PC-3 (cell line): ENCODE measurements at regions of chr2 and their contacts with region 1.

Region 1: GRCh38 chr2:149924028-149924427 is 336.5 kb upstream of the MMADHC start:
- DNase-seq: peak; percentile 61
- ATAC-seq: no peak
- H3K4me3 ChIP-seq: no peak overlapping the region
- H3K27ac ChIP-seq: peak overlapping the region; percentile 82
- H3K4me1 ChIP-seq: peaks cover 31% of the 10 kb centered on the region
- H3K27me3 ChIP-seq: no peaks in the 10 kb centered on the region
- CTCF ChIP-seq: no peak

Region 2: GRCh38 chr2:149629026-149629425 is 295.0 kb before region 1 on chr2:
- CTCF ChIA-PET with region 1: no interaction called
- POLR2A ChIA-PET with region 1: no interaction called
- intact Hi-C with region 1: no loop called
- DNase-seq: no peak
- ATAC-seq: no peak
- H3K4me3 ChIP-seq: no peak overlapping the region
- H3K27ac ChIP-seq: no peak overlapping the region
- H3K4me1 ChIP-seq: no peaks in the 10 kb centered on the region
- H3K27me3 ChIP-seq: no peaks in the 10 kb centered on the region
- CTCF ChIP-seq: no peak

Region 3: DNA sequence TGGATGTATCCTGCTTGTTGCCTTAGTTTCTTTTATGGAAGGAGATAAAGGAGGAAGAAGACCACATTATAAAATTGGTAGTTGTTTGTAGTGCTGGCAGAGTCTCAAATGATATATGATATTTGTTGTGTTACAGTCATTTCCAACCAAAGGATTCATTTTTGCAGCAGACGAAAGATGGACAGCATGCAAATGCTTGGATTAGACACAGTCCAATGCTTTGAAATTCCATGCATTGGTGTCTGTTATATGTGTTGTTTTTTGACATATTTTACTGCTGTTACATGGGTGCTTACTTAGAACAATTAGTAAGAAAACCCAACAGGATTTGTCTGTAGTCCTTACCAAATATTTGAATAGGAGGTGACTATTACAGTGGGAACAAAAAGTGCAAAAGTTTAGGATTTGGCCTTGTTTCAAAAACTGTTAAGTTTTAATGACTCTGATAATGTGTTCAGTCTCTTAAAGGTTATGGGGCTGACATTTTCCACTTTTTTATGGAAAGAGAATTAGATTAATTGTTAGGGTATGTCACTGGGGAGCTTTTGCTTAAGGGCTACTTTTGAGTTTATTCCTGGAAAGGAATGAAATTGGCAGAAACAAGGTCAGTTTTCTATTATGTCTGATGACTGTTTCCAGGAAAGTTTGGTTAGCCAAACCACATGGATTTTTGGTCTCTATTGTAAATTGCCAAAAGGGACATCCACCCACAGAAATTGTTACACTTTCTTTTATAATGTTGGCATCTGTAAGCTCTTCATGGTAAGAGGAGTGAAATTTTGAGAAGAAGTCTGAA is 107.1 kb before region 1 on chr2:
- CTCF ChIA-PET with region 1: no interaction called
- POLR2A ChIA-PET with region 1: no interaction called
- intact Hi-C with region 1: loop called (anchors 10 kb)
- DNase-seq: peak; percentile 7
- ATAC-seq: peak; percentile 70
- H3K4me3 ChIP-seq: no peak overlapping the region
- H3K27ac ChIP-seq: no peak overlapping the region
- H3K4me1 ChIP-seq: peaks cover 11% of the 10 kb centered on the region
- H3K27me3 ChIP-seq: no peaks in the 10 kb centered on the region
- CTCF ChIP-seq: no peak

Region 4: DNA sequence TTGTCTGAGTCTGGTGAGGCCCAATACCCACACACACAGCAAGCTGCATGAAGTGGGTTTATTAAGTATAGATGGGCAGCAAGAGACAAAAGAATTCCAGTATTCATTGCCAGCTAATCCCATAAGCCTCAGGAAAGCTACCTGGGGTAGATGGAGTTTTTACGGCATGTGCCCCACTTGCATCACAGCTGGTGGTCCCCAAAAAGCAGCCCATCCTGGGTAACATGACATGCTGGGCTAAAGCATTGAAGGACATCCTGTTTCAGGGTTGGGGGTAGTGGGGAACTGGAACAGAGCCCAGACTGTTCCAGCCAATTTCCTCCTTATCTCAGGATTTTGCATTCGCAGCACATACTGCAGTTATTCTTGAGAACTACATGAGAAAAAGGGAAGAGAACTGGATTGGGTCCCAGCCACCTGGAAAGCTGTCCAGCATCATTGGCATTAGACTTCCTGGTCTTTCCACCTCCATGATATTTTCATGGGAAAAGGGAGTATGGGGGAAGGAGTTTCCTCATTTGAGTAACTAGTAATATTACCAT is 96.4 kb before region 1 on chr2:
- CTCF ChIA-PET with region 1: no interaction called
- POLR2A ChIA-PET with region 1: no interaction called
- intact Hi-C with region 1: no loop called
- DNase-seq: no peak
- ATAC-seq: no peak
- H3K4me3 ChIP-seq: no peak overlapping the region
- H3K27ac ChIP-seq: no peak overlapping the region
- H3K4me1 ChIP-seq: no peaks in the 10 kb centered on the region
- H3K27me3 ChIP-seq: no peaks in the 10 kb centered on the region
- CTCF ChIP-seq: no peak

Region 5: GRCh38 chr2:150133623-150134022 is 209.6 kb after region 1 on chr2:
- CTCF ChIA-PET with region 1: no interaction called
- POLR2A ChIA-PET with region 1: no interaction called
- intact Hi-C with region 1: loop called (anchors 10 kb)
- DNase-seq: peak; percentile 97
- ATAC-seq: peak; percentile 97
- H3K4me3 ChIP-seq: no peak overlapping the region
- H3K27ac ChIP-seq: peak overlapping the region; percentile 77
- H3K4me1 ChIP-seq: peaks cover 21% of the 10 kb centered on the region
- H3K27me3 ChIP-seq: no peaks in the 10 kb centered on the region
- CTCF ChIP-seq: no peak